ENCODE measurements at regions of chr5 and their contacts with region 1.

Region 1: DNA sequence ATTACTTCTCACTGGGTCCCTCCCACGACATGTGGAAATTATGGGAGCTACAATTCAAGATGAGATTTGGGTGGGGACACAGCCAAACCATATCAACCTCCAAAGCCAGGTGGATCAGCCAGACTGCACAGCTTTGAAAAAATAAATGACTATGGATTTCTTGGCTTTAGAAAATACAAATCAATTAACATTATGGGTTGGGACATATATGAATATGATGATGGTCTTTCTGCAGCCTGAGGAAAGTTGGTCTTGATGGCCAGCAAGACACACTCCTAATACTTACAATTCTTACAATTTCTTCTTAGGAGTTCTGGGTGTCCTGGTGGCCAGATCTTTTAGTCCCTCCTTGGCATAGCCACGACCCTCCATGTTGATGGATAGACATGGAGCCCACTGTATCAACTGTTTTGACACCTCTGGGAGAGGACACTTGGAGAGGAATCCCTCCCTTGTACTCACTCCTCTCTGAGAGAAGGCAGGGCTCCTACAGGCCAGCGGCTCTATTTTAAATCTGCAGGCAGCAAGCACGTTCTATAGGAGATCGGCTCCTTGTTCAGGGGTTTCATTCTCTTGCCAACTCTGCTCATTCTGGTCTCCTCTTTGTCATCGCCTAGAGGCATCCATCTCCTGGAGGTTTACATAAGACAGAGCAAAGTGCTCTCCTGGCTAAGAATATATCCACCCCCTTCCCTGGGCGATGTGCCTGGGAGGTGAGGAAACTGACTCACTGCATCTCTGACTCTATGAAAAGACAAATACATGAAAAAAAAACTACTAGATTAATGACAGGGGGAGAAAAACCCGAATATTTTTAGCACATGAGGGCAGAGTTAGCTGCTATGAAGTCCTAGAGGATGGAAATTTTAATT is 145.9 kb downstream of the CARTPT start:
- DNase-seq: peak in 8 of 10 donors; percentile 26 to 76 (median 55)
- H3K4me3 ChIP-seq: no peak overlapping the region
- H3K27ac ChIP-seq: peak overlapping the region in 48 of 59 donors; percentile 29 to 86 (median 59)
- H3K27me3 ChIP-seq: no peaks in the 10 kb centered on the region
- CTCF ChIP-seq: no peak

Region 2: GRCh38 chr5:71836084-71836483 is 28.9 kb before region 1 on chr5:
- intact Hi-C with region 1: loop called in 1 of 2 experiments (anchors 2 kb)
- DNase-seq: no peak
- H3K4me3 ChIP-seq: no peak overlapping the region
- H3K27ac ChIP-seq: peak overlapping the region in 48 of 59 donors; percentile 8 to 87 (median 66)
- H3K27me3 ChIP-seq: no peaks in the 10 kb centered on the region
- CTCF ChIP-seq: peak in 6 of 56 donors; percentile 10 to 23 (median 16)